ENCODE measurements at regions of chr9 and their contacts with region 1.

Region 1: GRCh38 chr9:92140074-92140753 is 25.0 kb upstream of the SPTLC1 start:
- DNase-seq: peak; percentile 82
- CTCF ChIP-seq: peak; percentile 98

Region 2: DNA sequence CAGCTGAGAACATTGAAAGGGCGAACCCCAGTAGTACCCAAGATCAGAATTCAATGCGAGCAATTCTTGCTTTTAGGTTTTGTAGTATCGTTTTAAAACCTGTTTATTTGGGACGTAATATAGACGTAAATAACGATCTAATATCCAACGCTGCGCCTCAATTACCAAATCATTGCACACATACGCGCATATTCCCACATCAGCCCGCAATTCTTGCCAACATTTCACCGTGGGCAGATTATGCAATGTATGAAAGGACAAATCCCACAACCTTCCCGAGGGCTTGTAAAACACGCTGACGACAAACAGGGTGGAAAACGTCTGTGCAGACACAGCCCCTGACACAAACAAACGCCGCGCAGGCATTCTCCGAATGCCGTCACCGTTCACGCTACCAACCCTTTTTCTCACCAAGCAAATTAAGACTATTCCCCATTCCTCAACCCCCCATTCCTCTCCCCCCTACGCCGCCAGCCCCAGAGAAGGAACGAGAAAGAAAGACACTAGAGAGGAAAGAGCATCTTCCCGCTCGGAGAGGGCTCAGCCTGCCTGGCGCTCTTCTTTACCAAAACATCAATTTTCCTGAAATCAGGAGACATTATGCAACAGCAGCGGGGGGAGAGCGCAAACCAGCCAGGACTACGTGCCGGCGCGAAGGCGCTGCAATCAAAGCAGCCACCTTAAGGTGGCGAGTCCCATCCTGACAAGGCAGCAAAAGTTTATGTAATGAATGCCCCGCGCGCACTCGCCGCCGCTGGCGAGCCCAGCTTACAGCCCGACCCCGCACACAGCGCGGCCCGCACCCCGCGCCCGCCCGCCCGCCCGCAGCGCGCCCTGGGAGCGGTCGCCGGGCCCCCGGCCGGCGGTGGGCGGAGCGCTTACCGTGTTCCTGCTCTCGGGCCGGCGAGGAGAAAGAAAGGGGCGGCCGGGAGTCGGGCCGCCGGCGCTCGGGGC is 717.2 kb before region 1 on chr9:
- CTCF ChIA-PET with region 1: no interaction called
- POLR2A ChIA-PET with region 1: no interaction called
- DNase-seq: peak; percentile 58
- CTCF ChIP-seq: peak; percentile 38

Region 3: DNA sequence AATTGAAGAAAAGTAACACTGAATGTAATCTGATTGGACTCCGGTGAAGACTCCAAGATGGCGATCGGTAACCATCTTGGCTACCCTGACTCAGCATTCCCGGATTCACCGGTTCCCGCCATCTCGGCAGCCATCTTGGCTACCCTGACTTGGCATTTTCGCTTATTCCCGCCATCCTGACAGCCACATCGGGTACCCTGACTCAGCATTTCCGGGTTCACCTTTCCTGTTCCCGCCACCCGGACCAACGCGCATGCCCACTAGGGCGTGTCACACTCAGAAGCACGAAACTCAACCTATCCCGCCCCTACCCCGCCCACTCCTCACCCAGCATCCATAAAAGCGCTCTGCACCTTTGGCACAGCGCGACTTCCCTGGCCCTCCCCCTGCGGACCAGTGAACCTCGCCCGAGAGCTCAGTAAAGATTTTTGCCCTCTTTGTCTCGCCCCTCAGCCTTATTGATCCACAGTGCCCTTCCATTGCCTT is 42.2 kb before region 1 on chr9:
- CTCF ChIA-PET with region 1: no interaction called
- POLR2A ChIA-PET with region 1: no interaction called
- DNase-seq: no peak
- CTCF ChIP-seq: no peak

Region 4: DNA sequence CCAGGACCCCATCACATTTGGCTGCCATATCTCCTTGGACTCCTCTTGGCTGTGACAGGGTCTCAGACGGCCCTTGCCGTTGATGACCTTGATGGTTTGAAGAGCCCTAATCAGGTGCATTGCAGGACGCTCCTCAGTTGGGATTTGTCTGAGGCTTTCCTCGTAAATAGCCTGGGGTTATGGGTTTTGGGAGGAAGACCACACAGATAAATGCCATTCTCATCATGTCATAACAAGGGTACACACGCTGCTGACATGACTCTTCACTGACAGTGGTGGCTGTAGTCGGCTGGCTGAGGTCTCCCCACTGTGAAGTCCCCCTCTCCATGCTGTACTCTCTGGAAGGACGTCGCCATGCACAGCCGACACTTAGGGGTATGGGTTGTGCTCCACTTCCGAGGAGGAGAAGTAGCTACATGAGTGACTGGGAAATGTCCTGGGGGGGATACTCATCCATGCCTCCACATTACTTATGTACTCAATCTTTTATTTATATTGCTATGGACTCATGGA is 17.9 kb after region 1 on chr9:
- CTCF ChIA-PET with region 1: interaction called, 28 read pairs
- POLR2A ChIA-PET with region 1: no interaction called
- DNase-seq: no peak
- CTCF ChIP-seq: no peak

Region 5: DNA sequence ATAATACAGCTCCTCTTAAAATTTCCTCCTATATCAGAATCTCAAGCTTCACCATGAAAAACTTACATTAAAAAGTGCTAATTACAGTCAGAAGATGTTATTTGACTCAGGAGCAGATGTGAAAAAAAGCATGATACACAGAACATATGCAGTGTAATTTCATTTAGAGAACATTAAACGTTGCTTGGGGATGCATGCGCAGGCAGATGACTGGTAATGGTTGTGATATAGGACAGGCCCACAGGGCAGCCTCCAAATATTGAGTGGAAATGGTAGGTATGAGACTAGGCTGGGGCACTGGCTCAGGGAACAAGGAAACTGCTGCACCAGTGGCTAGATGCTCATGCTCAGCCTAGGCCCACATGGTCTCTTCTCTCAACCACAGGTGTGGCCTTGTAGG is 83.5 kb after region 1 on chr9:
- CTCF ChIA-PET with region 1: interaction called, 25 read pairs
- POLR2A ChIA-PET with region 1: no interaction called
- DNase-seq: no peak
- CTCF ChIP-seq: no peak

Region 6: DNA sequence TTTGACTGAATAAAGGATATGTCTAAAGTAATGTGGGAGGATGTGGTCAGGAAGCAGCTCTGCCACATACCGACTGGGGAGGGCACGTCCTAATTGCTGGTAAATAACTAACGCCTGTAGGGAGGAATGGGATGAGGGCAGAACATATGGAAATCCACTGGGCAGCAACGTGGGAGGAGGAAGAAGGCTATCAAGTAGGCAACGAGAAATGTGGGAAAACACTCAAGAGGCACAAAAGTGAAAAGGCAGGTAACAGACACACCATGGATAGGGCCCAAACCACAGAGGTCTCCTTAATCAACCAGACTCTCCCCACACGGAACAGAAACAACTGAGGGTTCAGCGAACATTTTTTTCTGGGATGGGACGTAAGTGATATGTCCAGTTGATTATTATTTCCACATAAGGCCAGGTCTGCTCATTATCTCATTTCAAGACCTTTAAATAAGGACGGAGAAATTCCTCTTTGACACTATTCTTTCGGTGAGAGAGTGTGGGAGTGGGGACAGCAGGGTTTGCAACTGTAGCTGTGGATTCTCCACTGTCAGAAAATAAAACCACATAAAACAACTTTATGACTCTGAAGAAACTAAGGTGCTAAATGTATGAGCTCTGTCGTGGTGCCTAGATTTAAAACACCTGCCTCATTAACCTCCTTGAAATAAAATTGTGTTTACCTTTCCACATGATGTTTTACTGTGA is 136.3 kb after region 1 on chr9:
- CTCF ChIA-PET with region 1: interaction called, 10 read pairs
- POLR2A ChIA-PET with region 1: no interaction called
- DNase-seq: no peak
- CTCF ChIP-seq: no peak

Region 7: DNA sequence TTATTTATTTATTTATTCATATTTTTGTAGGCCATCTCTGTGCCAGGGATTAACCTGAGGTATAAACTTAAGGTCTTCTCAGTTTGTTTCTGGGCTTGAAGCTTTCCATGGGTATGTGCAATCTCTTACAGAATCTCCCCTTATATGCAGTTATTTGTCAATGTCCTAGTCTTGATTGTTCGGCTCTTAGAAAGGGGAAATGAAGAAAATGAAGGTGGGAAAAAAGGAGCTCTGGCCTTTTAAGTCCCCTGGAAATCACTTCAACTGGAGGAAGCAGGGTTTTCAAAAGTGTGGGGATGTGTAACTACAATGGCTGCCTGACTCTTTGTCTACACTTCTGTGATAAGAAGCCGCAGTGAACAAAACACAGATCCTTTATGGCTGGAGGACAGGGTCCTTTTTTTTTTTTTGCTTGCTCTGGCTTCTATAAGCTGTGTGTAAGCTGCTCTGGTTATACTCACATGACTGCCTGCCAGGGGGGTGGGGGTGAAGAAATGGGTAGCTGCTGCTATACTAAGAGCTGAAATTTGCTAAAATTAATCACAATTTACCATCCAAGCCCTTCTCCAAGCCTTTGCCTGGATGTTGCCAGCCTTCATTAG is 219.3 kb after region 1 on chr9:
- CTCF ChIA-PET with region 1: no interaction called
- POLR2A ChIA-PET with region 1: no interaction called
- DNase-seq: no peak
- CTCF ChIP-seq: no peak

Region 8: GRCh38 chr9:92444841-92445240 is 304.6 kb after region 1 on chr9:
- CTCF ChIA-PET with region 1: interaction called, 33 read pairs
- POLR2A ChIA-PET with region 1: no interaction called
- DNase-seq: no peak
- CTCF ChIP-seq: no peak

Measured in GM10248 (cell line).